Activated CD4-positive, alpha-beta memory T cell treated with anti-CD3 and anti-CD28 coated beads, Interleukin-2, amount 10 ng/mL, durations not matched to agents 7 days and 5 days (primary cell): ENCODE measurements at regions of chr15 and their contacts with region 1.

Region 1: DNA sequence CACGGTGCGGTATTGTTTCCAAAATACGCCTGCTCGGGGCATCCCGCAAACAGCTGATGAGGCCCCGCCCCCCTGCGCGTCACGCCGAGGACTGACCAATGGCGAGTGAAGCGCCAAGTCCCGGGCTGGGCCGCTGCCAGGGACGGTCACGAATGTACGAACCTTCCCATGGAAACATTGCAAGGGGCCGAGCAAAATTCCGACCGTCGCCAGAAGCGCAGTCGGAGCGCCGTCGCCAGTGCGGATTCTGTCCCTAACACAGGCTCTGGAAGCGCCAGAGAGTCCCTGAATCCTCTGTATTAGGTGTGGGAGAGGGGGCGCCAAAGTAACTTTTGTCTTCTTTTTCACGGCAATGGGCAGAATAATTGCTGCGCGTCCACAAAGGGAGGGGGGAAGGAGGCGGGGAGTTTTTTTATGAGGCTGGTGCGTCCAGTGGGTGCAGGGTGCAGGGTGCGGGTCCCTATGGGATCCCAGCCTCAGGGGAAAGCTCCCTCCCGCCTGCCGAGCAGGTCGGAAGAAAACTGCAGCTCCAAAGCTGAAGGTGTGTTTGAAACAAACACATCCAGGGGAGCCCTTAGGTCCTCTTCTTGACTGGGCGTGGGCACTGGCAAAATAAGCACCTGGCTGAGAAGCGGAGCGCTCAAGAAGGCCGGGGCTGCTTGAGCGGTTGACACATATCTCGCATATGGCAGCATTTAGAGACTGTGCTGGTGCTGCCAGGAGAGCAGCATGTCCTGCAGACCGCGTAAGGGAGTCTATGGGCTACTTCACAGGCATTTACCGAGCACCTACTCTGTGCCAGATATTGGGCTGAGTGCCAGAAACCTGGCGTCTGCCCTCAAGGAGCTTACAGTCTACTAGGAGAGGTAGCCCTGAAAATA is at the start of gene BMF:
- DNase-seq: peak; percentile 98
- H3K4me3 Mint-ChIP-seq: peak within 1 kb of the TSS; percentile 93
- H3K27ac Mint-ChIP-seq: peak within 1 kb of the TSS; percentile 73
- H3K4me1 Mint-ChIP-seq: peaks cover 48% of the 10 kb centered on the region
- H3K27me3 Mint-ChIP-seq: peaks cover 21% of the 10 kb centered on the region
- total RNA-seq, gene BMF: 25.7 to 30.2 TPM

Region 2: GRCh38 chr15:40038638-40039543 is 70.2 kb before region 1 on chr15 and contains the start of gene SRP14:
- CTCF ChIA-PET with region 1: interaction called, 146 read pairs
- POLR2A ChIA-PET with region 1: interaction called, 9 read pairs
- DNase-seq: peak; percentile 94
- H3K4me3 Mint-ChIP-seq: peak within 1 kb of the TSS; percentile 100
- H3K27ac Mint-ChIP-seq: peak within 1 kb of the TSS; percentile 95
- H3K4me1 Mint-ChIP-seq: peaks cover 56% of the 10 kb centered on the region
- H3K27me3 Mint-ChIP-seq: no peaks in the 10 kb centered on the region
- total RNA-seq, gene SRP14: 150 to 153 TPM

Region 3: DNA sequence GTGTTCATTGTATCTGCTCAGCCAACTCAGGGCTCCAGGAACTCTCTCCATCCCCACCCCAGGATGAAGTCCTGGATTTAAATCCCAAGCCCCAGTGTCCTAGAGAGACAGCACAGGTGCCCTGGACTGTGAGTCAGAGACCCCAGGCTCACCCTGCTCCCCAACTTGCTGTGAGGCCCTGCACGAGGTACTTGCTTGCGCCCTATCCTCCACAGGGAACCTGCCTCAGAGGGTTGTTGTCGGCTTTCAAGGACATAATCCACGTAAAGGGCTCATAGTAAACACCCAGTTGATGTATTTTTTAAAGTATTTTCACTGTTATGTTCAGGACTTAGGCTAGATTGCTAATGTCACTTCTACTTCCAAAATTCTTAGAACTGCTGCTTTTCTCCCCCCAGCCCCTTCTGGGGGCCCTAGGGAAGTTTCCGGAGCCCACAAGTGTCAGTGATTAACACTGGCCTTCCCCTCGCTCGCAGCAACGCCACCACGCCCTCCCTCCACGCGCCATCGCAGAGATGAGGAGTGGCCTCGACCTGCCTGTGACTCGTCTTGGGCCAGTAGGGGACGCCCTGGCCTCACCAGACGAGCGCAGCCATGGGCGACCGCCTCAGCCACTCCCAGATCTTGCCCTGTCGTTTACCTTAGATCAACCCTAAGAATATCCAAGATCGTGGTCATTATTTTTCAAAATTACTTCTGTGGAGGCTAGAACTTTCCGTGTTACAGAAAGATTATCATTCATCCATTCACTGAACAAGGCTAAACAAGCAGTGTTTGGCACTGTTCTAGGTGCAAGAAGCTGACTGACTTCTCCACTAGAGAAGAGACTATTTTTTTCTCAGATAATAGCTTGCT is 64.2 kb before region 1 on chr15:
- CTCF ChIA-PET with region 1: interaction called, 146 read pairs
- POLR2A ChIA-PET with region 1: interaction called, 53 read pairs
- DNase-seq: peak; percentile 88
- H3K4me3 Mint-ChIP-seq: no peak overlapping the region
- H3K27ac Mint-ChIP-seq: peak overlapping the region; percentile 47
- H3K4me1 Mint-ChIP-seq: peaks cover 77% of the 10 kb centered on the region
- H3K27me3 Mint-ChIP-seq: no peaks in the 10 kb centered on the region

Region 4: GRCh38 chr15:40054605-40055545 is 54.2 kb before region 1 on chr15:
- CTCF ChIA-PET with region 1: interaction called, 146 read pairs
- POLR2A ChIA-PET with region 1: interaction called, 53 read pairs
- DNase-seq: peak; percentile 63
- H3K4me3 Mint-ChIP-seq: no peak overlapping the region
- H3K27ac Mint-ChIP-seq: peak overlapping the region; percentile 77
- H3K4me1 Mint-ChIP-seq: peaks cover 59% of the 10 kb centered on the region
- H3K27me3 Mint-ChIP-seq: no peaks in the 10 kb centered on the region

Region 5: GRCh38 chr15:40098489-40099261 is 10.4 kb before region 1 on chr15:
- CTCF ChIA-PET with region 1: interaction called, 82 read pairs
- POLR2A ChIA-PET with region 1: interaction called, 73 read pairs
- DNase-seq: peak; percentile 81
- H3K4me3 Mint-ChIP-seq: peak overlapping the region; percentile 48
- H3K27ac Mint-ChIP-seq: peak overlapping the region; percentile 90
- H3K4me1 Mint-ChIP-seq: peaks cover 78% of the 10 kb centered on the region
- H3K27me3 Mint-ChIP-seq: no peaks in the 10 kb centered on the region

Region 6: GRCh38 chr15:40121911-40122638 is 13.0 kb after region 1 on chr15:
- CTCF ChIA-PET with region 1: interaction called, 82 read pairs
- POLR2A ChIA-PET with region 1: interaction called, 4 read pairs
- DNase-seq: peak; percentile 6
- H3K4me3 Mint-ChIP-seq: no peak overlapping the region
- H3K27ac Mint-ChIP-seq: no peak overlapping the region
- H3K4me1 Mint-ChIP-seq: peaks cover 3% of the 10 kb centered on the region
- H3K27me3 Mint-ChIP-seq: peaks cover 10% of the 10 kb centered on the region